CD4-positive, alpha-beta T cell (primary cell): ENCODE measurements at regions of chr7 and their contacts with region 1.

Region 1: GRCh38 chr7:129825496-129826267 is 127.1 kb downstream of the UBE2H start:
- DNase-seq: peak; percentile 74 to 93 (median 88)
- ATAC-seq: peak; percentile 79
- H3K4me3 ChIP-seq: peak overlapping the region; percentile 71
- H3K4me3 Mint-ChIP-seq: peak overlapping the region; percentile 91
- H3K27ac ChIP-seq: no peak overlapping the region
- H3K27ac Mint-ChIP-seq: peak overlapping the region; percentile 39
- H3K4me1 ChIP-seq: peaks cover 28% of the 10 kb centered on the region
- H3K4me1 Mint-ChIP-seq: peaks cover 25% of the 10 kb centered on the region
- H3K27me3 ChIP-seq: no peaks in the 10 kb centered on the region
- H3K27me3 Mint-ChIP-seq: no peaks in the 10 kb centered on the region
- CTCF ChIP-seq: peak; percentile 87

Region 2: GRCh38 chr7:129343099-129343700 is 482.5 kb before region 1 on chr7:
- CTCF ChIA-PET with region 1: no interaction called
- POLR2A ChIA-PET with region 1: no interaction called
- intact Hi-C with region 1: loop called (anchors 1 to 5 kb)
- DNase-seq: peak in 4 of 14 experiments; percentile 12 to 61 (median 55)
- ATAC-seq: no peak
- H3K4me3 ChIP-seq: no peak overlapping the region
- H3K4me3 Mint-ChIP-seq: no peak overlapping the region
- H3K27ac ChIP-seq: no peak overlapping the region
- H3K27ac Mint-ChIP-seq: no peak overlapping the region
- H3K4me1 ChIP-seq: no peaks in the 10 kb centered on the region
- H3K4me1 Mint-ChIP-seq: peaks cover 15% of the 10 kb centered on the region
- H3K27me3 ChIP-seq: no peaks in the 10 kb centered on the region
- H3K27me3 Mint-ChIP-seq: no peaks in the 10 kb centered on the region
- CTCF ChIP-seq: peak; percentile 80

Region 3: GRCh38 chr7:129502376-129502776 is 323.3 kb before region 1 on chr7 and contains the start of gene SMKR1:
- CTCF ChIA-PET with region 1: no interaction called
- POLR2A ChIA-PET with region 1: no interaction called
- intact Hi-C with region 1: loop called in 1 of 2 experiments (anchors 2 kb)
- DNase-seq: peak; percentile 88 to 98 (median 94)
- ATAC-seq: peak; percentile 96
- H3K4me3 ChIP-seq: peak within 1 kb of the TSS; percentile 66
- H3K4me3 Mint-ChIP-seq: peak within 1 kb of the TSS; percentile 90
- H3K27ac ChIP-seq: peak within 1 kb of the TSS in 1 of 2 donors; percentile 13
- H3K27ac Mint-ChIP-seq: peak within 1 kb of the TSS; percentile 52
- H3K4me1 ChIP-seq: peaks cover 19% of the 10 kb centered on the region
- H3K4me1 Mint-ChIP-seq: peaks cover 6% of the 10 kb centered on the region
- H3K27me3 ChIP-seq: no peaks in the 10 kb centered on the region
- H3K27me3 Mint-ChIP-seq: no peaks in the 10 kb centered on the region
- CTCF ChIP-seq: no peak
- total RNA-seq, gene SMKR1: 0.22 to 0.49 TPM

Region 4: DNA sequence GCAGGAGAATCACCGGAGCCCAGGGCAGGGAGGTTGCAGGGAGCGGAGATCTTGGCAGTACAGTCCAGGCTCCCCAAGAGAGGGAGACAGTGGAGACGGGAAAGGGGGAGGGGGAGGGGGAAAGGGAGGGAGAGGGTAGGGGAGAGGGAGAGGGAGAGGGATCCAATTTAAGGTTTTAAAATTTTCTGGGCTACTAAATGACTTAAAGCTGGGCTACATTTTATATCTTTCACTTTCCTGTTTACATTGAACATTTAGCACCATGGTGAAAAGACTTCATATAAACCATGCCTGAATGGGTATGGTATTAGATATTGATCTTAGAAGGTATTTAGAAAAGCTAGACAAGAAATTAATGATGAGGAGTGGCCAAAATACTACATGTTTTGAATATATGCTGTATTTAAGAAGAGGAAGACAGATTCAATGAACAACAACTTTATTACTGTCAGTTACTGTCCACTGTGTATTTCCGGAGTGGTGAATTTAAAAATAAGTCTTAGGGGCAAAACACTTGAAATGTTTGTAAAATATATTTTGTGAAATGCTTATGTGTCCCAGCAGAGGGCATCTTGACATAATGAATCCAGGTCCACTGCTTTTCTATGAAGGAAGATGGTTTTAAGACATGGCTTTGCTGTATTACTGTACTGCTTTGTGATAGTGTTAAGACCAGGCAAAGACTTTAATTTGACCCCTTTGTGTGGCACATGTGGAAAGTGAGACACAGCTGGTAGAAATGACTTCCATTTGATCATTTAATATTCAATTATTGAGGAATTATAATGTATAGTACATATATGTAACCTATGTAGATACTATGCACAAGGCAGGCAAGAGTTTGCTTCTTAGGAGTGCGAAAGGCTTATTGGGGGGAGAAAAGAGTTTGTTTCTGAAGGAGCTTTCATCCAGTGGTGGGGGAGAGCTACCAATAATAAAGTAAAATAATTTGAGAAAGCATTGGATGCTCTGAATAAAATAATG is 161.4 kb before region 1 on chr7:
- CTCF ChIA-PET with region 1: no interaction called
- POLR2A ChIA-PET with region 1: no interaction called
- intact Hi-C with region 1: loop called (anchors 2 to 10 kb)
- DNase-seq: peak in 3 of 14 experiments; percentile 23 to 30 (median 27)
- ATAC-seq: no peak
- H3K4me3 ChIP-seq: no peak overlapping the region
- H3K4me3 Mint-ChIP-seq: no peak overlapping the region
- H3K27ac ChIP-seq: no peak overlapping the region
- H3K27ac Mint-ChIP-seq: no peak overlapping the region
- H3K4me1 ChIP-seq: no peaks in the 10 kb centered on the region
- H3K4me1 Mint-ChIP-seq: peaks cover 10% of the 10 kb centered on the region
- H3K27me3 ChIP-seq: no peaks in the 10 kb centered on the region
- H3K27me3 Mint-ChIP-seq: no peaks in the 10 kb centered on the region
- CTCF ChIP-seq: no peak

Region 5: DNA sequence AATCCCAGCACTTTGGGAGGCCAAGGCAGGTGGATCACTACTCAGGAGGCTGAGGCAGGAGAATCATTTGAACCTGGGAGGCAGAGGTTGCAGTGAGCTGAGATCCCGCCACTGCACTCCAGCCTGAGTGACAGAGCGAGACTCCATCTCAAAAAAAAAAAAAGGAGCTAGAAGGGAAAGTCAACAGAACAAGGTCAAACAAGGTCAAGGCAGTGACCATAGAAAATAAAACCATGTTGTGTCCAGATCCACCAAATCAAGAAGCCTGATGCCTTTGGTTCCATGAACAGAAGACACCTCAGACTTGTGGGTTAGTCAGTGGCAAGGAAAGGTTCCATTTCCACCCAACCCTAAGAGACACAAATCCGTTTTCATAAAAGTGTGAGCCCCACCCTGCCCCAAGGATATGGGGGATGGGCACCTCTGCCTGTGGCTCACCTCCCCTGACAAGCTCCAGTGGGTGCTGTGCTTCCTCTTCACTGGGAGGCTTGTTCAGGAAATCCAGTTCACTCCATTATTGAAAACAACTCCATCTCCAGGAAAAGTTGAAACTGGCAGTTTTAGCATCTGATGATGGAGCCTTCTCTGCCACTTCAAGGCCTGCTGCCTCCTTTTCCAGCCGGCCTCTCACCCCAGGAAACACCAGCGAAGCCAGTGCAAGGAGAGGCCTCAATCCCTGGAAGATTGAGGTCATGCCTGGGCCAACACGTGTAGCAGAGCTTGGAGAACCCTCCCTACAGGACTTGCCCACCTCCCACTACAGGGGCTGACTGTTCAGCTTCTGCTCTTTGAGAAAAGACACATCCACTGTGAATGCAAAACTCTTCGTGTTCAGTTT is 61.2 kb before region 1 on chr7:
- CTCF ChIA-PET with region 1: no interaction called
- POLR2A ChIA-PET with region 1: no interaction called
- intact Hi-C with region 1: no loop called
- DNase-seq: no peak
- ATAC-seq: no peak
- H3K4me3 ChIP-seq: no peak overlapping the region
- H3K4me3 Mint-ChIP-seq: no peak overlapping the region
- H3K27ac ChIP-seq: no peak overlapping the region
- H3K27ac Mint-ChIP-seq: no peak overlapping the region
- H3K4me1 ChIP-seq: peaks cover 5% of the 10 kb centered on the region
- H3K4me1 Mint-ChIP-seq: no peaks in the 10 kb centered on the region
- H3K27me3 ChIP-seq: no peaks in the 10 kb centered on the region
- H3K27me3 Mint-ChIP-seq: no peaks in the 10 kb centered on the region
- CTCF ChIP-seq: no peak

Region 6: DNA sequence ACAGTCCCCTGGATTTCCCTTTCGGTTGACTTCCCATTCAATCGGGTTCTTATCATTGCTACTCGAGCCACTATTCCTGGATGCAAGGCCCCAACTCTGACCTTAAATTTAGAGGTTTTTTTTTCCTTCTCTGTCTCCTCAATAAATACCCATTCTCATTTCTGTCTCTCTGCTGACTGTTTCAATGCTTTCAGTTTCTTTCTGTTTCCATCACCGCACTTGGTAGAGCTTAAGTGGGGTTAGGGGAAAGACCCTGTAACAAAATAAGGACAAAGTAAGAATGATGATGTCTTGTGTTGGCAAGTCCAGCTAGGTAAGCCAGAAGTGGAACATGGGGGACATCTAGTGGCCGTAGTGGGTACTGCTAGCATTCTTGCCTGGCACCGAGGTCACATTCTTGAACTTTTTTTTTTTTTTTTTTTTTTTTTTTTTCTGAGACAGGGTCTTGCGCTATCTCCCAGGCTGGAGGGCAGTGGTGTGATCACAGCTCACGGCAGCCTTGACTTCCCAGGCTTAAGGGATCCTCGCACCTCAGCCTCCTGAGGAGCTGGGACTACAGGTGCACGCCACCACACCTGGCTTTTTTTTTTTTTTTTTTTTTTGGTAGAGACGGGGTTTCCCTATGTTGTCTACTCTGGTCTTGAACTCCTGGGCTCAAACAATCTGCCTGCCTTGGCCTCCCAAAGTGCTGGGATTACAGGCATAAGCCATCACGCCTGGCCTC is 185.2 kb after region 1 on chr7:
- CTCF ChIA-PET with region 1: interaction called, 5 read pairs
- POLR2A ChIA-PET with region 1: no interaction called
- intact Hi-C with region 1: loop called (anchors 2 kb)
- DNase-seq: peak; percentile 75 to 92 (median 87)
- ATAC-seq: peak; percentile 87
- H3K4me3 ChIP-seq: no peak overlapping the region
- H3K4me3 Mint-ChIP-seq: no peak overlapping the region
- H3K27ac ChIP-seq: no peak overlapping the region
- H3K27ac Mint-ChIP-seq: no peak overlapping the region
- H3K4me1 ChIP-seq: peaks cover 5% of the 10 kb centered on the region
- H3K4me1 Mint-ChIP-seq: no peaks in the 10 kb centered on the region
- H3K27me3 ChIP-seq: no peaks in the 10 kb centered on the region
- H3K27me3 Mint-ChIP-seq: no peaks in the 10 kb centered on the region
- CTCF ChIP-seq: peak; percentile 87